ENCODE measurements at regions of chr2 and their contacts with region 1.

Region 1: GRCh38 chr2:99569386-99569785 is 79.6 kb upstream of the REV1 start:
- DNase-seq: no peak
- ATAC-seq: peak in 3 of 4 donors; percentile 21 to 43 (median 31)
- H3K4me3 ChIP-seq: no peak overlapping the region
- H3K27ac ChIP-seq: no peak overlapping the region
- H3K4me1 ChIP-seq: no peaks in the 10 kb centered on the region
- H3K27me3 ChIP-seq: no peaks in the 10 kb centered on the region
- CTCF ChIP-seq: no peak

Region 2: DNA sequence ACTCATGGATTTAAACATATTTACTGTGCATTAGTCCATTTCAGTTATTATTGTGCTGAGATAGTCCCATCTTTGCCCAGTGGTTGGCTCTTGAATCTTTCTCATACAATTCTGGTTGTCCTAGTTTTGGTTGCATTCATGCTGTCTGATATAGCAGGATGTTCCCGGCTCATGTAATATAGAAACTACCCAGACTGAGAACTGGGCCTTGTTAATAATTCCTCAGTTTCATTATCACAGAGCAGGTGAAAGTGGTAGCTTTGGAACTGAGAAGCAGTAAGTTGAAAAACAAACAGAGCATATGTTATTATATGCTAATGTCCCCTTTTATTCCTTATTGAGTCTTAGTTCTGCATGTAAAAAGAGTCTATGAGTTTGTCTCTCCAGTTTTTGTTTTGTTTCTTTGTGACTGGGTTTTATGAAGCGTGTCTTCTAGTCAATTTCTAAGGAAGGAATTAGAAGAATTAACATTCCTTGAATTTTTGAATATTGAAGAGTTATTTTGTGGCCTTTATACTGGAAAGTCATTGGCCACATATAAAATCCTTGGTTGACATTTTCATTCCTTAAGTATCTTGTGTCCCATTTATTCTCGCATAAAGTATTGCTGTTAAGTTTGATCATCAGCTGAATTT is 188.9 kb before region 1 on chr2:
- intact Hi-C with region 1: no loop called
- DNase-seq: no peak
- ATAC-seq: no peak
- H3K4me3 ChIP-seq: no peak overlapping the region
- H3K27ac ChIP-seq: no peak overlapping the region
- H3K4me1 ChIP-seq: no peaks in the 10 kb centered on the region
- H3K27me3 ChIP-seq: no peaks in the 10 kb centered on the region
- CTCF ChIP-seq: no peak

Region 3: GRCh38 chr2:99735753-99736152 is 166.4 kb after region 1 on chr2:
- intact Hi-C with region 1: no loop called
- DNase-seq: no peak
- ATAC-seq: no peak
- H3K4me3 ChIP-seq: no peak overlapping the region
- H3K27ac ChIP-seq: no peak overlapping the region
- H3K4me1 ChIP-seq: no peaks in the 10 kb centered on the region
- H3K27me3 ChIP-seq: no peaks in the 10 kb centered on the region
- CTCF ChIP-seq: no peak

Region 4: DNA sequence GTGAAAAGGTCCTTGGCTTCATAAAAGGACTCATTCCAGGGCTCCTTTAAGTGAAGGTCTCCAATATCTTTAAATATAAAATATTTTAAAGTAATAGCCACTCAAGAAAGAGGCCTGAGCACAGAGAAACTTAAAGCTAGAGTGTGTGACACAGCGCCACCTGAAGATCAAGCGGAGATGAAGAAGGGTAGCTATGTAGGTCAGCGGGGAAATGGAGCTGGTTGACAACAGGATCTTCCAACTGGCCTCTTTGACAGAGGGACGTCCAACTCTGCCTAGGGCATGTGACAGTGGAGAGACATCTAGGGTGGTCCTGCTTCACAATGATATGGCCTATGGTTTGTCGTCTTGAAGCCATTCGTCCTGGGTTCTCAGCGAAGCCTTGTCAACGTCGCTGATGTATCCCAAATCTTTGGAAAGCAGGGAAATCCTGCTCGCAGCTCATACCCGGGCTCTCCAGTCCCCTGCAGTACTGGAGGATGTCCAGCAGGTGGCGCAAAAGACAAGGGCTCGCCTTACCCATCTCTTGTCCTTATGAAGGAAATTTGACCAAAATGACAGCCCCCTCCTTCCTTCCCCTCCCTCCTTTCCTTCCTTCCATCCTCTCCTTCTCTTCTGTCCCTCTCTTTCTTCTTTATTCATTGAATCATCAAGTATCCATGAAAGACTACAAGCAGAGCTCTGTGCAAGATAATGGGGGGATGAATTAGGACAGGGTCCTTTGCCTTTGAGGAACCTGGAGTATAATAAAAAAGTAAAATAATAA is 693.4 kb after region 1 on chr2:
- intact Hi-C with region 1: loop called in 1 of 3 experiments (anchors 10 kb)
- DNase-seq: peak; percentile 28 to 88 (median 72)
- ATAC-seq: peak; percentile 69 to 89 (median 86)
- H3K4me3 ChIP-seq: no peak overlapping the region
- H3K27ac ChIP-seq: no peak overlapping the region
- H3K4me1 ChIP-seq: no peaks in the 10 kb centered on the region
- H3K27me3 ChIP-seq: no peaks in the 10 kb centered on the region
- CTCF ChIP-seq: peak; percentile 82 to 97 (median 94)